Sciatic nerve (tissue), 2 donors: ENCODE measurements at regions of chr10 and their contacts with region 1.

Region 1: GRCh38 chr10:111440501-111440900 is 363.7 kb downstream of the ADRA2A start:
- DNase-seq: no peak
- ATAC-seq: no peak

Region 2: GRCh38 chr10:110372656-110373055 is 1067.8 kb before region 1 on chr10:
- intact Hi-C with region 1: loop called (anchors 5 kb)
- DNase-seq: no peak
- ATAC-seq: no peak

Region 3: GRCh38 chr10:111493024-111493625 is 52.6 kb after region 1 on chr10:
- intact Hi-C with region 1: no loop called
- DNase-seq: no peak
- ATAC-seq: no peak